Adrenal gland (tissue), 19 donors: ENCODE measurements at regions of chrX and their contacts with region 1.

Region 1: GRCh38 chrX:17535229-17535628 is 160.2 kb downstream of the NHS start:
- DNase-seq: peak in 3 of 7 donors; percentile 32 to 54 (median 50)
- H3K4me3 ChIP-seq: no peak overlapping the region
- H3K27ac ChIP-seq: no peak overlapping the region
- H3K4me1 ChIP-seq: no peaks in the 10 kb centered on the region
- H3K27me3 ChIP-seq: peaks cover 6% of the 10 kb centered on the region
- CTCF ChIP-seq: peak; percentile 12 to 51 (median 35)
- POLR2A ChIP-seq: no peak

Region 2: GRCh38 chrX:17580539-17581152 is 45.4 kb after region 1 on chrX:
- intact Hi-C with region 1: loop called in 1 of 2 experiments (anchors 10 kb)
- DNase-seq: peak in 5 of 7 donors; percentile 24 to 52 (median 27)
- H3K4me3 ChIP-seq: no peak overlapping the region
- H3K27ac ChIP-seq: peak overlapping the region in 2 of 5 donors; percentile 60
- H3K4me1 ChIP-seq: peaks cover 0 to 10% of the 10 kb centered on the region in 2 donors
- H3K27me3 ChIP-seq: no peaks in the 10 kb centered on the region
- CTCF ChIP-seq: no peak
- POLR2A ChIP-seq: no peak

Region 3: GRCh38 chrX:17788439-17788838 is 253.2 kb after region 1 on chrX:
- intact Hi-C with region 1: no loop called
- DNase-seq: peak; percentile 24 to 60 (median 31)
- H3K4me3 ChIP-seq: no peak overlapping the region
- H3K27ac ChIP-seq: no peak overlapping the region
- H3K4me1 ChIP-seq: no peaks in the 10 kb centered on the region
- H3K27me3 ChIP-seq: no peaks in the 10 kb centered on the region
- CTCF ChIP-seq: peak; percentile 47 to 81 (median 72)
- POLR2A ChIP-seq: no peak